A673 (cell line): ENCODE measurements at regions of chr4 and their contacts with region 1.

Region 1: DNA sequence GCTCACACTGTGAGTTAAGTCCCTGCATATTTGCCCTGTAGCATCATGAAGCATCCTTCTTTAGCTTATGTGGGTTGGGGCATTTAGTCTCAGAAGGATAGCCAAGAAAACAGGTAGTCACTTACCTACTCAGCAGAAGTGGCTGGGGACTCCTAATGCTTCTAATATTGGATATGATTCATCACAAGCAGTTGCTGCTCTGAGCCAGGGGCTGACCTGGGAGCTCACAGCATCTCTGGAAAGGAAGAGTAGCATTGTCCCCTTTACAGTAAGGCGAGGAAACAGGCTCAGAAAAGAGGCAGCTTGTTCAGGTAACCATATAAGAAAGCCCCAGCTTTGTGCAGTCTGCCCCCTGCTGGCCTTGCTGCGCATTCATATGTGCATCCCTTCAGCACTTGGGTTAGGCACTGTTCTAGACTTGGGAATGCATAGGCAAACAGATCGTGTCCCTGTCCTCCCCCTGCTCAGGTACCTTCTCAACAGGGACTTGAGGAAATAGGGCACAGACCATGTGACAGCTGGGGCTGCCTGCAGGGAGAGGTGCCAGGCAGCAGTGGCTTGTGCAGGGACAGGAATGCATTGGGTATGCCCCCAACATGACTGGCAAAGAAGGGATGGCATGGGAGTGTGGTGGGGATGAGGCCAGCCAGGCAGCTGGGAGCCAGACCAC is 35.7 kb upstream of the TBC1D14 start:
- DNase-seq: peak; percentile 67
- H3K4me3 ChIP-seq: no peak overlapping the region
- H3K27ac ChIP-seq: no peak overlapping the region
- H3K4me1 ChIP-seq: no peaks in the 10 kb centered on the region
- H3K27me3 ChIP-seq: no peaks in the 10 kb centered on the region
- CTCF ChIP-seq: peak; percentile 84

Region 2: DNA sequence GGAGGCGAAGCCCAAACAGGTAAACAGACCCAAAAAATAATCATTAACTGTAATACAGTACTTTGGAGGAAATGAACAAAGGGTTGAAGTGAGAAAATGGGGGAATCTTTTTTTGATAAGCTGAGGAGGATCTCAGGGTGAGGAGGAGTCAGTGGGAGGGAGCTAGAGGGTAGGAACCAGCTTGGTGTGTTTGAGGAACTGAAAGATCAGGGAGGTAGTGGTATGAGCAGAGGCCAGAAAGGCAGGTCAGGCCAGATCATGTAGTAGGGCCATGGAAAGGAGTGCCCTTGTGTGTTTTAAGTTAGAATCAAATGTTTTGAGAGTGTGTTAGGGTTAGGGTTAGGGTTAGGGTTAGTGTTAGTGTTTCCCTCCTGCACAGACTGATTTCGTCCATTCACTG is 450.4 kb before region 1 on chr4:
- CTCF ChIA-PET with region 1: no interaction called
- POLR2A ChIA-PET with region 1: no interaction called
- intact Hi-C with region 1: no loop called
- DNase-seq: no peak
- H3K4me3 ChIP-seq: no peak overlapping the region
- H3K27ac ChIP-seq: no peak overlapping the region
- H3K4me1 ChIP-seq: no peaks in the 10 kb centered on the region
- H3K27me3 ChIP-seq: peaks cover 12% of the 10 kb centered on the region
- CTCF ChIP-seq: no peak

Region 3: GRCh38 chr4:6783053-6783981 is 90.6 kb before region 1 on chr4:
- CTCF ChIA-PET with region 1: interaction called, 3 read pairs
- POLR2A ChIA-PET with region 1: no interaction called
- intact Hi-C with region 1: loop called (anchors 5 kb)
- DNase-seq: peak; percentile 94
- H3K4me3 ChIP-seq: peak overlapping the region; percentile 98
- H3K27ac ChIP-seq: peak overlapping the region; percentile 99
- H3K4me1 ChIP-seq: peaks cover 27% of the 10 kb centered on the region
- H3K27me3 ChIP-seq: no peaks in the 10 kb centered on the region
- CTCF ChIP-seq: peak; percentile 22; the same call in 1 of the 2 replicates